ENCODE measurements at regions of chr9 and their contacts with region 1.

Region 1: DNA sequence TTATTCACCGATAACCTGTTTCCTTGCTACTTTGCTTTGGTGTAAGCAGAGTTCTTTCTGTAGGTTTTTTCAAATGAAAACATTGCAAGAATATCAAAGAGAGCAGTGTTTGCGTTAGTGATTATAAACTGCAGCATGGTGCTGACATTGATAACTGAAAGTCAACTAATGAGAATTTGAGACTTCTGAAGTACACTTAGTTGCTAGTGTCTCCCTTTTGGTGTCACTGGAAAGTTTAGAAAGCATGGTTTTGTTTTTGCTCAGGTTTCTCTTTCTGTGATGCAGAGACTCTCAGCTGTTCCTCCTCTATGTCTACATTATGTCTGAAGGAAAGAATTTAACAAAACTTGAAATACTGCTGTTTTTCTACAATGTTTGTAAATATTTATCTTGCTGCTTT is 80.2 kb upstream of the ZNF169 start:
- DNase-seq: no peak
- ATAC-seq: no peak
- H3K4me3 ChIP-seq: no peak overlapping the region
- H3K27ac ChIP-seq: no peak overlapping the region
- H3K4me1 ChIP-seq: peaks cover 5 to 97% (median 78%) of the 10 kb centered on the region in 9 donors
- H3K27me3 ChIP-seq: no peaks in the 10 kb centered on the region
- CTCF ChIP-seq: no peak

Region 2: GRCh38 chr9:94065535-94065961 is 113.4 kb before region 1 on chr9:
- intact Hi-C with region 1: loop called in 1 of 10 experiments (anchors 10 kb)
- DNase-seq: peak; percentile 40 to 78
- ATAC-seq: peak; percentile 71 to 91 (median 84)
- H3K4me3 ChIP-seq: no peak overlapping the region
- H3K27ac ChIP-seq: peak overlapping the region in 3 of 10 donors; percentile 8 to 38 (median 31)
- H3K4me1 ChIP-seq: peaks cover 0 to 13% (median 3%) of the 10 kb centered on the region in 9 donors
- H3K27me3 ChIP-seq: no peaks in the 10 kb centered on the region
- CTCF ChIP-seq: peak; percentile 69 to 96 (median 89)